A549 (cell line): ENCODE measurements at regions of chr10 and their contacts with region 1.

Region 1: GRCh38 chr10:124388823-124389612 is 29.7 kb downstream of the OAT start:
- DNase-seq: peak; percentile 78 to 88
- ATAC-seq: peak; percentile 90 to 97
- H3K4me3 ChIP-seq: peak overlapping the region; percentile 42
- H3K27ac ChIP-seq: peak overlapping the region; percentile 66 to 84; a peak in 5 of 6 replicates
- H3K4me1 ChIP-seq: no peaks in the 10 kb centered on the region; the same call in 2 of the 3 replicates
- CTCF ChIP-seq: peak; percentile 98
- EP300 ChIP-seq: no peak
- POLR2A ChIP-seq: peak; percentile 28; the same call in 1 of the 2 replicates
- RAD21 ChIP-seq: peak; percentile 93 to 100

Region 2: GRCh38 chr10:123986742-123987141 is 402.3 kb before region 1 on chr10:
- CTCF ChIA-PET with region 1: interaction called, 17 read pairs
- POLR2A ChIA-PET with region 1: no interaction called
- DNase-seq: no peak
- ATAC-seq: no peak
- H3K4me3 ChIP-seq: no peak overlapping the region
- H3K27ac ChIP-seq: no peak overlapping the region
- H3K4me1 ChIP-seq: no peaks in the 10 kb centered on the region
- CTCF ChIP-seq: no peak
- EP300 ChIP-seq: no peak
- POLR2A ChIP-seq: no peak
- RAD21 ChIP-seq: no peak

Region 3: GRCh38 chr10:124092860-124093773 is 295.9 kb before region 1 on chr10 and contains the start of gene CHST15:
- CTCF ChIA-PET with region 1: interaction called, 12 read pairs
- POLR2A ChIA-PET with region 1: interaction called, 9 read pairs
- DNase-seq: peak; percentile 75 to 79
- ATAC-seq: peak; percentile 47 to 67
- H3K4me3 ChIP-seq: peak within 1 kb of the TSS; percentile 69
- H3K27ac ChIP-seq: peak within 1 kb of the TSS; percentile 73 to 92
- H3K4me1 ChIP-seq: peaks cover 9% of the 10 kb centered on the region
- CTCF ChIP-seq: peak; percentile 26; the same call in 1 of the 3 replicates
- EP300 ChIP-seq: no peak
- POLR2A ChIP-seq: peak; percentile 16; the same call in 1 of the 2 replicates
- RAD21 ChIP-seq: no peak; a peak in 2 of 5 replicates
- polyA plus RNA-seq, gene CHST15: 10.3 and 10.4 TPM in 2 replicates

Region 4: GRCh38 chr10:124185084-124185483 is 203.9 kb before region 1 on chr10:
- CTCF ChIA-PET with region 1: interaction called, 10 read pairs
- POLR2A ChIA-PET with region 1: no interaction called
- DNase-seq: no peak
- ATAC-seq: no peak
- H3K4me3 ChIP-seq: no peak overlapping the region
- H3K27ac ChIP-seq: no peak overlapping the region
- H3K4me1 ChIP-seq: no peaks in the 10 kb centered on the region
- CTCF ChIP-seq: no peak
- EP300 ChIP-seq: no peak
- POLR2A ChIP-seq: no peak
- RAD21 ChIP-seq: no peak

Region 5: GRCh38 chr10:124378881-124379471 is 10.0 kb before region 1 on chr10:
- CTCF ChIA-PET with region 1: interaction called, 42 read pairs
- POLR2A ChIA-PET with region 1: no interaction called
- DNase-seq: peak in 1 of 2 experiments; percentile 34
- ATAC-seq: peak; percentile 40 to 52; a peak in 4 of 6 replicates
- H3K4me3 ChIP-seq: no peak overlapping the region
- H3K27ac ChIP-seq: no peak overlapping the region
- H3K4me1 ChIP-seq: no peaks in the 10 kb centered on the region
- CTCF ChIP-seq: no peak
- EP300 ChIP-seq: no peak
- POLR2A ChIP-seq: no peak
- RAD21 ChIP-seq: no peak